ENCODE measurements at regions of chr13 and their contacts with region 1.

Region 1: GRCh38 chr13:102854675-102855074 is 8.8 kb downstream of the ERCC5 start:
- DNase-seq: no peak
- ATAC-seq: no peak
- H3K4me3 ChIP-seq: no peak overlapping the region
- H3K27ac ChIP-seq: peak overlapping the region in 1 of 10 donors; percentile 6
- H3K4me1 ChIP-seq: peaks cover 0 to 19% (median 6%) of the 10 kb centered on the region in 9 donors
- H3K27me3 ChIP-seq: no peaks in the 10 kb centered on the region
- CTCF ChIP-seq: no peak

Region 2: GRCh38 chr13:102003848-102004570 is 850.7 kb before region 1 on chr13:
- intact Hi-C with region 1: loop called in 1 of 10 experiments (anchors 5 kb)
- DNase-seq: no peak
- ATAC-seq: peak in 1 of 8 donors; percentile 45
- H3K4me3 ChIP-seq: no peak overlapping the region
- H3K27ac ChIP-seq: peak overlapping the region in 7 of 10 donors; percentile 2 to 66 (median 49)
- H3K4me1 ChIP-seq: peaks cover 0 to 31% (median 20%) of the 10 kb centered on the region in 9 donors
- H3K27me3 ChIP-seq: no peaks in the 10 kb centered on the region
- CTCF ChIP-seq: no peak

Region 3: GRCh38 chr13:102609696-102610095 is 245.0 kb before region 1 on chr13:
- intact Hi-C with region 1: no loop called
- DNase-seq: no peak
- ATAC-seq: no peak
- H3K4me3 ChIP-seq: no peak overlapping the region
- H3K27ac ChIP-seq: no peak overlapping the region
- H3K4me1 ChIP-seq: peaks cover 0 to 32% (median 8%) of the 10 kb centered on the region in 9 donors
- H3K27me3 ChIP-seq: no peaks in the 10 kb centered on the region
- CTCF ChIP-seq: no peak

Measured in heart right ventricle (tissue), 16 donors.